ENCODE measurements at regions of chr6 and their contacts with region 1.

Region 1: DNA sequence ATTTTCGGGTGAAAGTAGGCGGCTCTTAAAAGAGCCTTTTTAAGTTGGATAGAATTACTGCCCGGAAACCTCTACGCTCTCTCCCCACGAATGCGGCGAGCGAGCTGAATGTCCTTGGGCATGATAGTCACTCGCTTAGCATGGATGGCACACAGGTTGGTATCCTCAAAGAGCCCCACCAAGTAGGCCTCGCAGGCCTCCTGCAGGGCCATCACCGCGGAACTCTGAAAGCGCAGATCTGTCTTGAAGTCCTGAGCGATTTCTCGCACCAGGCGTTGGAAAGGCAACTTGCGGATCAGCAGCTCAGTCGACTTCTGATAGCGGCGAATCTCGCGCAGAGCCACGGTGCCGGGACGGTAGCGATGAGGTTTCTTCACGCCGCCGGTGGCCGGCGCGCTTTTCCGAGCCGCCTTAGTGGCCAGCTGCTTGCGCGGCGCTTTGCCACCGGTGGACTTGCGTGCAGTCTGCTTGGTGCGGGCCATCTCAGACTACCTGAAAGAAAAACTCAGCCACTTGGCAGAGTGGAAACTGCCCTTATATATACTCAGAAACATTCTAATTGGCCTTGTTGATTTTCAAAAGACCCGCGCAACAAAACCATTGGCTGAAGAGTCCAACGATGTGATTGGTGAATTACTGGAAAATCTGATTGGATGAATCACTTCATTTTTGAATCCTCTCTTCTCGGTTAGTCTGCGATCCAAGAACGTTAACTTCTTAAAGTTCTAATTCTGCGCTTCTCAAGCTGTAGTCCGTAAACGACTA is 93.9 kb upstream of the BTN3A2 start:
- DNase-seq: peak; percentile 92
- H3K4me3 ChIP-seq: peak overlapping the region; percentile 43 to 45 (median 44)
- H3K27ac ChIP-seq: peak overlapping the region; percentile 75
- H3K4me1 ChIP-seq: peaks cover 11% of the 10 kb centered on the region
- H3K27me3 ChIP-seq: no peaks in the 10 kb centered on the region
- CTCF ChIP-seq: no peak

Region 2: GRCh38 chr6:26122793-26123674 is 148.1 kb before region 1 on chr6:
- CTCF ChIA-PET with region 1: no interaction called
- dilution Hi-C with region 1: no loop called
- in situ Hi-C with region 1: no loop called
- intact Hi-C with region 1: loop called (anchors 5 kb)
- DNase-seq: peak; percentile 97
- H3K4me3 ChIP-seq: peak overlapping the region; percentile 51 to 62 (median 53)
- H3K27ac ChIP-seq: peak overlapping the region; percentile 92
- H3K4me1 ChIP-seq: peaks cover 28% of the 10 kb centered on the region
- H3K27me3 ChIP-seq: no peaks in the 10 kb centered on the region
- CTCF ChIP-seq: no peak

Region 3: DNA sequence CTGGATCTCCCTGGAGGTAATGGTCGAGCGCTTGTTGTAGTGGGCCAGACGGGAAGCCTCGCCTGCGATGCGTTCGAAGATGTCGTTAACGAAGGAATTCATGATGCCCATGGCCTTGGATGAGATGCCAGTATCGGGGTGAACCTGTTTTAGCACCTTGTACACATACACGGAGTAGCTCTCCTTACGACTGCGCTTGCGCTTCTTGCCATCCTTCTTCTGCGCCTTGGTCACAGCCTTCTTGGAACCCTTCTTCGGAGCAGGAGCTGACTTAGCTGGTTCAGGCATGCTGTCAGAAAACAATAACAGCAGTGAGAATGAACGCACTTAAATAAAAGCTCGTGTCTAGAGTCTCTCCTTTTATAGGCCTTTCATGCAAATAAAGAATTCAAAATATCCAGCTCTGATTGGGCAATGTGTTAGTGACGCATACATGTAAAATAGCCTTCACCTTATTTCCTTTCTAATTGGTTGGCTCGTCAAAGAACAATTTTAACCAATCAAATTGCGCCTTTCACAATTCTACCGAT is 54.7 kb before region 1 on chr6:
- CTCF ChIA-PET with region 1: no interaction called
- dilution Hi-C with region 1: no loop called
- in situ Hi-C with region 1: loop called in 1 of 2 experiments (anchors 5 kb)
- intact Hi-C with region 1: loop called (anchors 1 kb)
- DNase-seq: peak; percentile 98
- H3K4me3 ChIP-seq: peak overlapping the region; percentile 57 to 68 (median 65)
- H3K27ac ChIP-seq: peak overlapping the region; percentile 86
- H3K4me1 ChIP-seq: peaks cover 12% of the 10 kb centered on the region
- H3K27me3 ChIP-seq: no peaks in the 10 kb centered on the region
- CTCF ChIP-seq: no peak

Region 4: DNA sequence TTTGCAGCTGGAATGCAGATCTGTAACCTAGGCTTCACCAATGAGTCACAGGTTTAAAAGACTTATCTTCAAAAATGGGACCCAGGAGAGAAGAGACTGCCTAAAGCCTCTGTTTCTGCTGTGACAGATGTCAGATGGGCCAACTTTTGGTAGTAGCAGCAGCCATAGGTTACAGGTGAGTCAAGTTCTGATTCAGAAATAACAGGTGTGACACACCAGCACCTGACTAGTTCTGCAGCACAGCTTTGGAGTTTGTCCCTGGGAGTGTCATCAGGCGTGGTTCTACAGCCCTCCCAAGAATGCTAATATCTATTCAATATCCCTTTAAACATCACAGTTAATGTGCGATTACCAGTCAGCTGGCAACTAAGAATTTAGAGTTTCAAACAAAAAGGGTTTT is 28.0 kb before region 1 on chr6:
- CTCF ChIA-PET with region 1: interaction called, 37 read pairs
- dilution Hi-C with region 1: no loop called
- in situ Hi-C with region 1: no loop called
- intact Hi-C with region 1: no loop called
- DNase-seq: peak; percentile 74
- H3K4me3 ChIP-seq: no peak overlapping the region
- H3K27ac ChIP-seq: no peak overlapping the region
- H3K4me1 ChIP-seq: peaks cover 16% of the 10 kb centered on the region
- H3K27me3 ChIP-seq: no peaks in the 10 kb centered on the region
- CTCF ChIP-seq: no peak

Region 5: GRCh38 chr6:26312501-26313390 is 41.7 kb after region 1 on chr6:
- CTCF ChIA-PET with region 1: interaction called, 3 read pairs
- dilution Hi-C with region 1: no loop called
- in situ Hi-C with region 1: no loop called
- intact Hi-C with region 1: loop called (anchors 1 kb)
- DNase-seq: peak; percentile 81
- H3K4me3 ChIP-seq: peak overlapping the region; percentile 60 to 89 (median 70)
- H3K27ac ChIP-seq: peak overlapping the region; percentile 58
- H3K4me1 ChIP-seq: peaks cover 28% of the 10 kb centered on the region
- H3K27me3 ChIP-seq: no peaks in the 10 kb centered on the region
- CTCF ChIP-seq: no peak

Measured in mammary epithelial cell (primary cell).